WTC11 (cell line): ENCODE measurements at regions of chr10 and their contacts with region 1.

Region 1: DNA sequence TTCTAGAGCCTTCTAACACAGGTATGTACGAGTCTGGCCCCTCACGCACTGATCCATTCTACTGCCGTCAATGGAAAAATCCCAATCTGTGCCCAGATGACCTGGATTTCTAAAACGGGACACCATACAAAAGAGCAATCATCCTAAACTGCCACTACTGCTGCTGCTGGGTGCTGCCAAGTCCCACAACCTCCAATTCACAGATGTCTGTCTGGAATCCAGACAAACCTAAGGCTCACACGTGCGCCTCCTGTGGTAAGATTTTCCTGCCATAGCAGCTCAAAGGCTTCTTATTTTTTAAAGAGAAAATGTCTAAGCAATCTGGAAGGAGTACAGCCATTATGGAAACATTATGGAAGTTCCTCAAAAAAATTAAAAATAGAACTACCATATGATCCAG is 40.9 kb downstream of the JCAD start:
- DNase-seq: no peak
- ATAC-seq: no peak; the same call in 1 of the 2 replicates
- H3K4me3 Mint-ChIP-seq: no peak overlapping the region
- H3K27ac Mint-ChIP-seq: no peak overlapping the region
- H3K4me1 Mint-ChIP-seq: peaks cover 3% of the 10 kb centered on the region; the same call in 1 of the 2 replicates
- H3K27me3 Mint-ChIP-seq: no peaks in the 10 kb centered on the region
- CTCF ChIP-seq: no peak

Region 2: GRCh38 chr10:29908962-29909361 is 109.5 kb before region 1 on chr10:
- CTCF ChIA-PET with region 1: no interaction called
- POLR2A ChIA-PET with region 1: no interaction called
- DNase-seq: no peak
- ATAC-seq: no peak
- H3K4me3 Mint-ChIP-seq: no peak overlapping the region
- H3K27ac Mint-ChIP-seq: no peak overlapping the region
- H3K4me1 Mint-ChIP-seq: no peaks in the 10 kb centered on the region
- H3K27me3 Mint-ChIP-seq: no peaks in the 10 kb centered on the region
- CTCF ChIP-seq: no peak

Region 3: DNA sequence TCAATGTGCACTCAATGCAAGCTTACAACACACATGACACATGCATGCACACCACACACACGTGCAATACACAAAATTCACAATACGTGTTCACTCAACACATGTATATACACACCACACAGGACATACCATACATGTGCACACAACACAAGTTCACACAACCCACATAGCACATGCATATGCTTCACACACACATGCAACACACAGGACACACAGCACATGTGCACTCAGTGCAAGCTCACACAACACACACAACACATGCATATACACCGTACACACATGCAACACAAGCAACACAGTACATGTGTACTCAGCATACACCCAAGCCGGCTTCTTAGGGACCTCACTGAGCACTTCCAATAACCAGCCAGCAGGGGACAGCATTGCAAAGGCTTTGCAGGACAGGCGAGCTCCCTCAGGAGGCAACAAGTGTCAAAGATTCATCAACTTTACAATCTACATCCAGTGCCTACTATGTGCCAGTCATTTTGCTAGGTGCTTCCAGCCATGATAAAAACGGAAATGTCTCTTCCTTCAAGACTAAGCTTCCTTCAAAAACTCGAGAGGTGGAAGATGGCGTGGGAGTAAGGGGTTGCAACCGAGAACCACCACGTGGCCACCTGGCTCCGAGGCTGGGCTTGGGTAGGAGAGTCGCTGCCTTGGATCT is 20.2 kb before region 1 on chr10:
- CTCF ChIA-PET with region 1: interaction called, 10 read pairs
- POLR2A ChIA-PET with region 1: no interaction called
- DNase-seq: peak; percentile 81
- ATAC-seq: peak; percentile 79
- H3K4me3 Mint-ChIP-seq: no peak overlapping the region
- H3K27ac Mint-ChIP-seq: no peak overlapping the region
- H3K4me1 Mint-ChIP-seq: peaks cover 15% of the 10 kb centered on the region
- H3K27me3 Mint-ChIP-seq: no peaks in the 10 kb centered on the region; the same call in 1 of the 2 replicates
- CTCF ChIP-seq: peak; percentile 96

Region 4: DNA sequence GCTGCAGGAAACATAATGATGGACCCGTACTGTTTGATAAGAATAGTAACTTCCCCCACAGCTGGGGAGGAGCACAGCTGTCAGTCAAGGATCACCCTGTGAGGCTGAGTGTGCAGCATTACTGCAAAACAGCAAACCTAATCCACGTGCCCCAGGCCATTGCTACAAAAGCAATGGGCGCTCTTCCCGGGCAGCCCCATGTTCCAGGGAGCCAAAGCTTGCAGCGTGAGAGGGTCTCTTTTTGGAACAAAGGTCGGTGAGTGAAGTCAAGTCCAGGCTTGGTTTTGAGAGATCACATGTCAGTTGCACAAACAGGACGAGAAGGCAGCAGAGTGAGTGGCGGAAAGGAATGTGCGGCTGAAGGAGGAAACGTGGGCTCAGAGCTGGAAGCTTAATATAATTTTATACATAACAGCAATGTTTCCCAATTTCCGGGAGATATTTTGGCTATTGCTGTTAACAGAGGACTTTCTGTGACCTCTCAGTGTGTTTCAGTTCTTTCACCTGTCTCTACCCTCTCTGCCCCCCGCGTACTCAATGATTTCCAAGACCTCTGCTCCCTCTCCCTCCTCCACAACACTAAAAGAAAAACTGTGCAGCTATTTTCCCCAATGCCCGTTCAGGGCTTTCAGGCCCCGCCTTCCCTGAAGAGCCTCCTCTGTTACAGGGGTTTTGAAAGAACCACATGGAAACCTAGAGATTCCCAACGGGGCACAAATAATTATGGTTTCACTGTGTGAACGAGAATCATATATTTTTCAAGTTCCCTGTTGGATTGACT is 201.7 kb after region 1 on chr10:
- CTCF ChIA-PET with region 1: no interaction called
- POLR2A ChIA-PET with region 1: no interaction called
- DNase-seq: no peak
- ATAC-seq: no peak
- H3K4me3 Mint-ChIP-seq: no peak overlapping the region
- H3K27ac Mint-ChIP-seq: no peak overlapping the region
- H3K4me1 Mint-ChIP-seq: peaks cover 22% of the 10 kb centered on the region
- H3K27me3 Mint-ChIP-seq: peaks cover 3% of the 10 kb centered on the region; the same call in 1 of the 2 replicates
- CTCF ChIP-seq: no peak

Region 5: DNA sequence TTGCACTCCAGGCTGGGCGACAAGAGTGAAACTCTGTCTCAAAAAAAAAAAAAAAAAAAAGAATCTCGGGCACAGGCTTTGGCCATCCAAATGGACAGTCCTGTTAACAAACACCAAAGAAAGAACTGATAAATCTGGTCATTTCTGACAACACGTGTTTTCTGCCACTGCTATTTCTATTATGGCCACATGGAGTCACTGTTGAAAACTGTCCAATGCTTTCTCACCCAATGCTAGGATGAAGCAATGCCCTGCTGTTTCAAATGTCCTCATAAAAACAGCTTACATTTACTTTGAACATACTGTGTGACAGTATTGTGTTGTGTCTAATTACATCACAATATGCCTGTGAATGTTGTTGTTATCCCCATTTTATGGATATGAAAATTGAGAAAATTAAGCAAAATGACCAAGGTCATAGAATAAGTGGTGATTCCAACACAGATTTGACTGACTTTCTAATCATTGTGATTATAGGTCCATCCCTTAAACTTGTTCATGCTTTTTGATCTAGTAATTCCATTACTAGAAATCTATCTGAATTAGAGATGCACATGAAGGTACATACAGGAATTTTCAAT is 395.6 kb after region 1 on chr10:
- CTCF ChIA-PET with region 1: no interaction called
- POLR2A ChIA-PET with region 1: no interaction called
- DNase-seq: no peak
- ATAC-seq: peak; percentile 51
- H3K4me3 Mint-ChIP-seq: no peak overlapping the region
- H3K27ac Mint-ChIP-seq: no peak overlapping the region
- H3K4me1 Mint-ChIP-seq: peaks cover 8% of the 10 kb centered on the region
- H3K27me3 Mint-ChIP-seq: no peaks in the 10 kb centered on the region
- CTCF ChIP-seq: peak; percentile 40; the same call in 1 of the 2 replicates